Left colon (tissue), 2 donors: ENCODE measurements at regions of chr18 and their contacts with region 1.

Region 1: DNA sequence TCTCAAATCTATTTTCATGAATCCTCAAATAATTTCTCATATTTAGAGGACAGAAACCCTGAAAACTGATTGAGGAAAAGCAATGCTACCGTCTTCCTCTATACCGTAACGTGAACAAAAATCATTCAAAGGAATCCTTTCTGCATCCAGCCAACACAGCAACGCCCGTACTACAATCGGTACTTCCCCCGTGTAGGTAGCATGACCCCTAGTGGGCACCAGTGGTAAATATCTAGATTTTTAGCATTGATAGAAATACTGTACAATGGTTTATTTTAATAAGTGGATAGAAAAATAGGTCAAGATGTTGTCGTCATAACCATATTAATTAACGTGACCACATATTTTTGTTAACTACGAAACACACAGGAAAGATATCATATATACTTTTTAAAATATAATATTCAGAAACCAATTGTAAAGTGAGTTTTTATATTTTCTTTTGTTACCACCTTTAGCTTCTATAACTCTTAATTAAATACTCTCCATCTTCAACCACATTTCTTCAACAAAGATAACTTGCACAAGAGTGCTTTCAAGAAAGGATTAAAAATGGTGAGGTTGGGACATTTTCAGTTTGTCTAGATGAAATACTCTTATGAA is 194.1 kb downstream of the SS18 start:
- DNase-seq: peak in 1 of 2 donors; percentile 26
- ATAC-seq: peak; percentile 64

Region 2: DNA sequence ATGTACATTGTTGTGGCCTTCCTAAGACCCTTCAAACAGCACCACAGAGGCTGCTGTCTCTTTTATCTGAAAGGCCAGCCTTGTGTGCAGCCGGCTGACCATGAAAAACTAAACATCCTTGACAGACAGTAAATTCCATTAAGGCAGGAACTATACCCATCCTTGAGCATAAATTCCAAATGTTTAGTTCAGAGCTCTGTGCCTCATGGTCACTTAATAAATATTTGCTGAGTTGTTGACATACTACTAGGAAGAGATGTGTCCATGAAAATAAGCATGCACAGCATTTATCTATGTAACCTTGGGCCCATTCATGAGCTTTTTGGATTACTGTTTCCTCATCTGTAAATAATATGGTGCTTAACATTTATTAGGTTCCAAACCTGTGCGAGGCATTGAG is 1011.0 kb before region 1 on chr18:
- intact Hi-C with region 1: loop called in 1 of 2 experiments (anchors 10 kb)
- DNase-seq: no peak
- ATAC-seq: no peak

Region 3: GRCh38 chr18:26902291-26902690 is 1006.0 kb after region 1 on chr18:
- intact Hi-C with region 1: no loop called
- DNase-seq: no peak
- ATAC-seq: no peak